ENCODE measurements at regions of chr4 and their contacts with region 1.

Region 1: GRCh38 chr4:25271866-25272265 is 38.0 kb downstream of the PI4K2B start:
- DNase-seq: no peak

Region 2: GRCh38 chr4:25253071-25253445 is 18.8 kb before region 1 on chr4:
- intact Hi-C with region 1: loop called in 1 of 2 experiments (anchors 1 kb)
- DNase-seq: no peak

Region 3: DNA sequence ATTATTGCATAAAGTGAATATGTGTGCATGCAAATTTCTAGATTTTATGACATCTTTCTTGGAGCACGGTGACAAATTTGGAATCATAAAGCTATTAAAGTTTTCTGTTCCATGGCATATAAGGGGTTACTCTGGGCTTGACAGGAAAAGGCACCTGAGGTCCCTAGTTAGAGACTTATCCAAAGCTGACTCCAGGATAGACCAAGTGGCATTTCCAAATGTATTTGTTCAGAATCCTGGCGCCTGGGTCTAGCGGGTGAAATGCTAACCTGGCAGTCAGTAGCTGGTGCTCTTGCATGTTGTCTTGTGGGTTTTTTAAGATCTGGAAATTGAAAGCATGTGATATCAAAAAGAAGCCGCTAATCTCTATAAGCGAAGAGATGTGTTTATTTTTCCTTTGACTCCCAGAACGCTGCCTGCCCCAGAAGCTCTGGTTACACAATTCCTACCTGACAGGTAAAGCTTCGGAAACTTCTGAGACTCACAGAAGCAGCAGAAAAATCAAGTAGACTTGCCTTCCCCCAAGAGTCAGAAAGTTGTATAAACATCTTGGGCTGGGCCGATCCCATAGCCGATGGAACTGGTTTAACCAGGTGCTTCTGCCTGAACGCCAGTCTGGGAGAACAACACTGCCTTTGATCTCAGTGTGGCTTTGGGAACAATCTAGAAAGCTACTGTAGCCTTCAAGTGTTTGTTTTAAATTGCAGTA is 27.8 kb after region 1 on chr4:
- intact Hi-C with region 1: loop called in 1 of 2 experiments (anchors 1 kb)
- DNase-seq: no peak

Measured in posterior vena cava (tissue), 2 donors.